HepG2 (cell line): ENCODE measurements at regions of chr9 and their contacts with region 1.

Region 1: GRCh38 chr9:112717661-112718341 is at the start of gene INIP:
- DNase-seq: peak; percentile 95
- ATAC-seq: peak; percentile 96
- H3K4me3 ChIP-seq: peak within 1 kb of the TSS; percentile 86 to 94 (median 87)
- H3K27ac ChIP-seq: peak within 1 kb of the TSS; percentile 86
- H3K4me1 ChIP-seq: peaks cover 23% of the 10 kb centered on the region
- H3K27me3 ChIP-seq: no peaks in the 10 kb centered on the region
- CTCF ChIP-seq: peak; percentile 71
- EP300 ChIP-seq: no peak
- POLR2A ChIP-seq: peak; percentile 69 to 79
- RAD21 ChIP-seq: peak; percentile 44; the same call in 1 of the 2 replicates
- total RNA-seq, gene INIP: 28.6 and 42.0 TPM in 2 replicates

Region 2: GRCh38 chr9:112097712-112098688 is 619.8 kb before region 1 on chr9:
- CTCF ChIA-PET with region 1: no interaction called
- POLR2A ChIA-PET with region 1: no interaction called
- in situ Hi-C with region 1: loop called (anchors 25 kb)
- intact Hi-C with region 1: no loop called
- DNase-seq: peak; percentile 33
- ATAC-seq: peak; percentile 81
- H3K4me3 ChIP-seq: no peak overlapping the region
- H3K27ac ChIP-seq: no peak overlapping the region
- H3K4me1 ChIP-seq: no peaks in the 10 kb centered on the region
- H3K27me3 ChIP-seq: no peaks in the 10 kb centered on the region
- CTCF ChIP-seq: peak; percentile 76
- EP300 ChIP-seq: no peak
- POLR2A ChIP-seq: no peak
- RAD21 ChIP-seq: peak; percentile 68

Region 3: GRCh38 chr9:112486221-112487007 is 231.4 kb before region 1 on chr9 and contains the start of gene KIAA1958:
- CTCF ChIA-PET with region 1: no interaction called
- POLR2A ChIA-PET with region 1: no interaction called
- in situ Hi-C with region 1: loop called (anchors 25 kb)
- intact Hi-C with region 1: no loop called
- DNase-seq: peak; percentile 81
- ATAC-seq: peak; percentile 90
- H3K4me3 ChIP-seq: peak within 1 kb of the TSS; percentile 88 to 95 (median 93)
- H3K27ac ChIP-seq: peak within 1 kb of the TSS; percentile 86
- H3K4me1 ChIP-seq: peaks cover 45% of the 10 kb centered on the region
- H3K27me3 ChIP-seq: no peaks in the 10 kb centered on the region; a peak in 1 of 5 replicates
- CTCF ChIP-seq: peak; percentile 36
- EP300 ChIP-seq: no peak
- POLR2A ChIP-seq: peak; percentile 92 to 99
- RAD21 ChIP-seq: peak; percentile 42
- total RNA-seq, gene KIAA1958: 8.5 and 11.4 TPM in 2 replicates

Region 4: GRCh38 chr9:112620388-112620787 is 97.4 kb before region 1 on chr9:
- CTCF ChIA-PET with region 1: no interaction called
- POLR2A ChIA-PET with region 1: no interaction called
- in situ Hi-C with region 1: no loop called
- intact Hi-C with region 1: no loop called
- DNase-seq: no peak
- ATAC-seq: no peak
- H3K4me3 ChIP-seq: no peak overlapping the region
- H3K27ac ChIP-seq: peak overlapping the region; percentile 16
- H3K4me1 ChIP-seq: peaks cover 13% of the 10 kb centered on the region
- H3K27me3 ChIP-seq: no peaks in the 10 kb centered on the region
- CTCF ChIP-seq: no peak
- EP300 ChIP-seq: no peak
- POLR2A ChIP-seq: no peak
- RAD21 ChIP-seq: no peak

Region 5: GRCh38 chr9:112731971-112732370 is 14.2 kb after region 1 on chr9:
- CTCF ChIA-PET with region 1: no interaction called
- POLR2A ChIA-PET with region 1: interaction called, 32 read pairs
- in situ Hi-C with region 1: no loop called
- intact Hi-C with region 1: no loop called
- DNase-seq: peak; percentile 92
- ATAC-seq: peak; percentile 95
- H3K4me3 ChIP-seq: peak overlapping the region; percentile 40 to 60 (median 58); a peak in 4 of 6 replicates
- H3K27ac ChIP-seq: peak overlapping the region; percentile 84
- H3K4me1 ChIP-seq: peaks cover 26% of the 10 kb centered on the region
- H3K27me3 ChIP-seq: no peaks in the 10 kb centered on the region
- CTCF ChIP-seq: no peak
- EP300 ChIP-seq: peak in 1 of 2 experiments; percentile 55; a peak in 1 of 4 replicates
- POLR2A ChIP-seq: peak; percentile 38 to 64; a peak in 3 of 4 replicates
- RAD21 ChIP-seq: no peak

Region 6: DNA sequence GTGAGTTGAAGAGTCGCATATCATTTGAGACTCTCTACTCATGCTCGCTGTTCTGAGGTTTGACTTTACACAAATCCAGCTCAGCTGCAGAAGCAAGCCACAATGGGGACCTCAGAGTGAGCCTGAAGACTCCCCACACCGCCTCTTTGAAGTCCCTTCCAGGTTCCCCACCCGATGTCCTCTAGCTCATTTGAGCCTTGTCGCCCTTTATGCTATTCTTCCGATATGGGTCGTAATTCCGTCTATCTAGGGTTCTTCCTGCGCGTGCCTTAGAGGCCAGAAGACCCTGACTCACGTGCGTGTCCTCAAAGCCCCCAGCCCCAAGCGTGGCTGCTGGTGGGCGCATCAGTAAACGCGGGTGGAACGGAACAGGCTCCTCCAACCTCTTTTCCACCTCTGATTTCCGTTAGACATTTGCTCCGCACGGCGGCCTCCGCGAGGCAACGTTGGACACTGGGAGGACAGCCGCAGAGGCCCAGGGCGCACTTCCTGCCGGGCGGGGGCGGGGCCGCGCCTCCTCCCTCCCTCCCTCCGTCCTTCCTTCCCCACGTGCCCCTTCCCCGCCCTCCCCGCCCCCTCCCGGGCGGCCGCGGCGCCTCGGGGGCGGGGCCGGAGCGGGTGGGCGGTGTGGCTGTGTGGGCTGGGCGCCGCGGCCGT is 32.4 kb after region 1 on chr9 and contains the start of gene SNX30:
- CTCF ChIA-PET with region 1: no interaction called
- POLR2A ChIA-PET with region 1: interaction called, 17 read pairs
- in situ Hi-C with region 1: no loop called
- intact Hi-C with region 1: loop called (anchors 1 kb)
- DNase-seq: peak; percentile 79
- ATAC-seq: peak; percentile 79
- H3K4me3 ChIP-seq: peak within 1 kb of the TSS; percentile 86 to 97 (median 89)
- H3K27ac ChIP-seq: peak within 1 kb of the TSS; percentile 89
- H3K4me1 ChIP-seq: peaks cover 76% of the 10 kb centered on the region
- H3K27me3 ChIP-seq: no peaks in the 10 kb centered on the region; a peak in 1 of 5 replicates
- CTCF ChIP-seq: peak; percentile 60
- EP300 ChIP-seq: no peak
- POLR2A ChIP-seq: peak; percentile 92 to 93
- RAD21 ChIP-seq: no peak; the same call in 1 of the 2 replicates
- total RNA-seq, gene SNX30: 12.4 and 18.9 TPM in 2 replicates

Region 7: GRCh38 chr9:112793213-112793810 is 75.5 kb after region 1 on chr9:
- CTCF ChIA-PET with region 1: interaction called, 4 read pairs
- POLR2A ChIA-PET with region 1: no interaction called
- in situ Hi-C with region 1: no loop called
- intact Hi-C with region 1: loop called (anchors 1 kb)
- DNase-seq: peak; percentile 57
- ATAC-seq: peak; percentile 99
- H3K4me3 ChIP-seq: no peak overlapping the region
- H3K27ac ChIP-seq: no peak overlapping the region
- H3K4me1 ChIP-seq: no peaks in the 10 kb centered on the region
- H3K27me3 ChIP-seq: no peaks in the 10 kb centered on the region
- CTCF ChIP-seq: peak; percentile 96
- EP300 ChIP-seq: no peak
- POLR2A ChIP-seq: no peak
- RAD21 ChIP-seq: peak; percentile 89